ENCODE measurements at regions of chr9 and their contacts with region 1.

Region 1: GRCh38 chr9:137694967-137695879 is 76.4 kb downstream of the EHMT1 start:
- H3K4me3 Mint-ChIP-seq: no peak overlapping the region
- H3K27ac Mint-ChIP-seq: no peak overlapping the region
- H3K4me1 Mint-ChIP-seq: peaks cover 34% of the 10 kb centered on the region
- H3K27me3 Mint-ChIP-seq: no peaks in the 10 kb centered on the region

Region 2: DNA sequence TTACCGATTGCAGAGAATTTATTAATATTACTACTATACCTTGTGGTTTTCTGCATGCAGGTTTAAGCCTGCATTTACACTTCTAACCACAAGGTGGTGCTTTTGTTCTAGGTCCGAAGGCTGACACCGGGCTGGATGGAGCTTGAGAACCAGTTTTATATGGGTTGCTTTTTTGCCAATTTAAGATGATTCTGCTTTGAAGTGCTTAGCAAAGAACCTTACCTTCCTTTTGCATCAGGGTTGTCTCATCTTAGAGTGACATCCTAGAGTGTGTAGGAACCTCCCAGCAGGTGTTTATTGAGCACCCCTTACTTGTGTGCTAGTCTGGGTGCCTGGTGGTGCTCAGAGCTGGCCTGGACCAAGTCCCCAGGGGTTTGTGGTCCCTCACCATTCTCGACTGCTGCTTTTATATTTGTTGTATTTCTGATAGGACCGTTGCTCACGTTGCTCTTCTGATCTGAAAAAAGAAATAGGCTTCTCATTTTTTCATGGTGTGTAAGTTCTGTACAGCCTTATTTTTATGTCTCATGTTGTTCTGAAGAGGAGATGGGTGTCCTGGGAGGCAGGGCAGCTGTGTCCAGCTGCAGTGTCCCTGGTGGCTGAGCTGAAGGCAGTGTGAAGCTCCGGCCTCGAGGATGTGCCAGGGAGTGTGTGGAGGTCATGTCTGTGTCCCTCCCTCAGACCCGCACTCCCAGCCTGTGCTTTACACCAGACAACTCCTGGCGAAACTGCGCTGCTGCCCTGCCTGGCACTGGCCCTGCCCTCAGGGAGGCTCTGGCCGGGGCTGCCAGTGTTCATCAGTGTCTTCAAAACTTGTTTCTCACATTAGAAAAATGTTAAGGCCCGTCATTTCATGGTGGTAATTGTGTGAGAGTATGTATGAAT is 22.1 kb before region 1 on chr9:
- intact Hi-C with region 1: loop called (anchors 2 kb)
- H3K4me3 Mint-ChIP-seq: no peak overlapping the region
- H3K27ac Mint-ChIP-seq: no peak overlapping the region
- H3K4me1 Mint-ChIP-seq: peaks cover 40% of the 10 kb centered on the region
- H3K27me3 Mint-ChIP-seq: no peaks in the 10 kb centered on the region

Region 3: GRCh38 chr9:137945581-137945980 is 250.4 kb after region 1 on chr9:
- intact Hi-C with region 1: no loop called
- H3K4me3 Mint-ChIP-seq: no peak overlapping the region
- H3K27ac Mint-ChIP-seq: no peak overlapping the region
- H3K4me1 Mint-ChIP-seq: no peaks in the 10 kb centered on the region
- H3K27me3 Mint-ChIP-seq: no peaks in the 10 kb centered on the region